T-cell (primary cell): ENCODE measurements at regions of chr6 and their contacts with region 1.

Region 1: GRCh38 chr6:96138406-96138805 is 122.6 kb downstream of the FUT9 start:
- DNase-seq: no peak
- ATAC-seq: no peak
- H3K4me3 ChIP-seq: no peak overlapping the region
- H3K4me3 Mint-ChIP-seq: no peak overlapping the region
- H3K27ac ChIP-seq: no peak overlapping the region
- H3K27ac Mint-ChIP-seq: no peak overlapping the region
- H3K4me1 ChIP-seq: no peaks in the 10 kb centered on the region
- H3K4me1 Mint-ChIP-seq: no peaks in the 10 kb centered on the region
- H3K27me3 ChIP-seq: peaks cover 0 to 3% of the 10 kb centered on the region in 2 experiments
- H3K27me3 Mint-ChIP-seq: peaks cover 0 to 4% of the 10 kb centered on the region in 2 donors

Region 2: DNA sequence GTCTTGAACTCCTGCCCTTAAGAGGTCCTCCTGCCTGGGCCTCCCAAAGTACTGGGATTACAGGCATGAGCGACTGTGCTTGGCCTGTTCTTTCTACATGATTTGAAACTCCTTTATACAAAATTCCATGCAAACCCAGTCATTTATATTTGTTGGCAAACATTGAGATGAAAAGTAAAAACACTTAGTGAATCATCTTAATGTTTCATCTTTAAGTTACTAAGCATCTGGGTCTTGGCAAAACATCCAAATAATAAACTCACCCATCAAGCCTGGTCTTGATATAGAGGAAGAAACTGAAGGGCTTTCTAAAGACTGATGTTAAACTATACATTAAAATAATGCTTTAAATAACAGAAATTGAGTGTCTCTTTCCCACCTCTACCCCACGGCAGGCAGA is 27.5 kb before region 1 on chr6:
- CTCF ChIA-PET with region 1: no interaction called
- POLR2A ChIA-PET with region 1: interaction called in 1 of 2 experiments, 11 read pairs
- DNase-seq: no peak
- ATAC-seq: no peak
- H3K4me3 ChIP-seq: no peak overlapping the region
- H3K4me3 Mint-ChIP-seq: no peak overlapping the region
- H3K27ac ChIP-seq: no peak overlapping the region
- H3K27ac Mint-ChIP-seq: no peak overlapping the region
- H3K4me1 ChIP-seq: no peaks in the 10 kb centered on the region
- H3K4me1 Mint-ChIP-seq: no peaks in the 10 kb centered on the region
- H3K27me3 ChIP-seq: no peaks in the 10 kb centered on the region
- H3K27me3 Mint-ChIP-seq: no peaks in the 10 kb centered on the region